ENCODE measurements at regions of chr18 and their contacts with region 1.

Region 1: GRCh38 chr18:10100941-10101701 is 187.3 kb downstream of the VAPA start:
- DNase-seq: no peak
- ATAC-seq: no peak
- H3K4me3 ChIP-seq: no peak overlapping the region
- H3K27ac ChIP-seq: no peak overlapping the region
- H3K4me1 ChIP-seq: no peaks in the 10 kb centered on the region
- H3K27me3 ChIP-seq: peaks cover 29% of the 10 kb centered on the region; the same call in 1 of the 2 replicates
- CTCF ChIP-seq: no peak
- POLR2A ChIP-seq: no peak
- RAD21 ChIP-seq: no peak

Region 2: DNA sequence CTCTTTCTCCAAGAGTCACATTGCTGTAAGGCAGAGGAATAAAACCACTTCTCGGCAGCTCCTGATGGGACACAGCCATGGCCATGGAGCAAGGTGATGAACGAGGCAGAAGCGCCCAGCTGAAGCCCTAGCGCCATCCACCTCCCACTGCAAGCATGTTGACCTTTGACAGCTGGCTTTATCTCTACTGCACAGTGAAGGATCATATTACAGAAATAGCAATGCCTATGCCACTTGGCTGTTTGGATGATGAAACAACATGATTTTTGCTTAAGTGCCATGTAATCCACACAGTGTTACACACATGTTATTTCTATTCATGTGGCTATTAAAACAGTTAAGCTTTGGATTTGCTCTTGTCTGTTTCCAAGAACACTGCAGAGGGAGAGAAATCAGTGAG is 19.6 kb before region 1 on chr18:
- CTCF ChIA-PET with region 1: no interaction called
- POLR2A ChIA-PET with region 1: no interaction called
- RAD21 ChIA-PET with region 1: no interaction called
- intact Hi-C with region 1: no loop called
- DNase-seq: no peak
- ATAC-seq: no peak
- H3K4me3 ChIP-seq: no peak overlapping the region
- H3K27ac ChIP-seq: no peak overlapping the region
- H3K4me1 ChIP-seq: peaks cover 12 to 15% of the 10 kb centered on the region in 2 experiments; a peak in 2 of 4 replicates
- H3K27me3 ChIP-seq: no peaks in the 10 kb centered on the region
- CTCF ChIP-seq: no peak
- POLR2A ChIP-seq: no peak
- RAD21 ChIP-seq: no peak

Region 3: GRCh38 chr18:10182009-10182624 is 81.0 kb after region 1 on chr18:
- CTCF ChIA-PET with region 1: no interaction called
- POLR2A ChIA-PET with region 1: no interaction called
- RAD21 ChIA-PET with region 1: no interaction called
- intact Hi-C with region 1: loop called (anchors 2 kb)
- DNase-seq: no peak
- ATAC-seq: no peak
- H3K4me3 ChIP-seq: no peak overlapping the region
- H3K27ac ChIP-seq: no peak overlapping the region
- H3K4me1 ChIP-seq: no peaks in the 10 kb centered on the region; a peak in 1 of 4 replicates
- H3K27me3 ChIP-seq: 0 out of 2 replicates have a peak, but pooled peaks cover 4% of the 10 kb centered on the region
- CTCF ChIP-seq: no peak
- POLR2A ChIP-seq: no peak
- RAD21 ChIP-seq: no peak

Region 4: DNA sequence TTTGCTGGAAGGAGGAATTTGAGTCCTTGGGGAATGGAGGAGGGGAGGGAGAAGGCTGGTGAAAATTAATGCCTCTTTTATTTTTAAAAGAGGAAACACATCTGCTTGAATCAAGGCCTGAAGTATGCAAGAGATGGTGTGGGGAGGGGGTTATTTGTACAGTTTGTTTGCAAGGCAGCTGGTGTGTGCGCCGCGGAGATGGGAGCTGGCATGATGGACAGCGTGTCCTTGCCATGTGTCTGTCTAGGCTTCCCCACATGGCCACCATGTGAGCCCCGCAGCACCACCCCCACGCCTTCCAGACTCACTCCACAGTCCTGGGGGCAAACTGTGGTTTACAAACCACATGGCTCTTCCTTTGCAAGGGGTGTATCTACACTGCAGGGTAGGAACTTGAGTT is 198.5 kb after region 1 on chr18:
- CTCF ChIA-PET with region 1: no interaction called
- POLR2A ChIA-PET with region 1: no interaction called
- RAD21 ChIA-PET with region 1: no interaction called
- intact Hi-C with region 1: no loop called
- DNase-seq: no peak
- ATAC-seq: no peak
- H3K4me3 ChIP-seq: no peak overlapping the region
- H3K27ac ChIP-seq: no peak overlapping the region
- H3K4me1 ChIP-seq: no peaks in the 10 kb centered on the region
- H3K27me3 ChIP-seq: peaks cover 5% of the 10 kb centered on the region; the same call in 1 of the 2 replicates
- CTCF ChIP-seq: no peak
- POLR2A ChIP-seq: no peak
- RAD21 ChIP-seq: no peak

Measured in HCT116 (cell line).